H1 (cell line): ENCODE measurements at regions of chr1 and their contacts with region 1.

Region 1: GRCh38 chr1:206544562-206545257 is 37.4 kb downstream of the RASSF5 start:
- DNase-seq: peak; percentile 50 to 99
- H3K4me3 ChIP-seq: no peak overlapping the region
- H3K27ac ChIP-seq: no peak overlapping the region
- H3K4me1 ChIP-seq: peaks cover 0 to 3% (median 2%) of the 10 kb centered on the region in 4 experiments; a peak in 2 of 7 replicates
- H3K27me3 ChIP-seq: no peaks in the 10 kb centered on the region
- CTCF ChIP-seq: peak; percentile 84 to 93 (median 92)
- EP300 ChIP-seq: peak in 1 of 2 experiments; percentile 58; a peak in 1 of 3 replicates
- POLR2A ChIP-seq: no peak
- RAD21 ChIP-seq: peak; percentile 80 to 88

Region 2: DNA sequence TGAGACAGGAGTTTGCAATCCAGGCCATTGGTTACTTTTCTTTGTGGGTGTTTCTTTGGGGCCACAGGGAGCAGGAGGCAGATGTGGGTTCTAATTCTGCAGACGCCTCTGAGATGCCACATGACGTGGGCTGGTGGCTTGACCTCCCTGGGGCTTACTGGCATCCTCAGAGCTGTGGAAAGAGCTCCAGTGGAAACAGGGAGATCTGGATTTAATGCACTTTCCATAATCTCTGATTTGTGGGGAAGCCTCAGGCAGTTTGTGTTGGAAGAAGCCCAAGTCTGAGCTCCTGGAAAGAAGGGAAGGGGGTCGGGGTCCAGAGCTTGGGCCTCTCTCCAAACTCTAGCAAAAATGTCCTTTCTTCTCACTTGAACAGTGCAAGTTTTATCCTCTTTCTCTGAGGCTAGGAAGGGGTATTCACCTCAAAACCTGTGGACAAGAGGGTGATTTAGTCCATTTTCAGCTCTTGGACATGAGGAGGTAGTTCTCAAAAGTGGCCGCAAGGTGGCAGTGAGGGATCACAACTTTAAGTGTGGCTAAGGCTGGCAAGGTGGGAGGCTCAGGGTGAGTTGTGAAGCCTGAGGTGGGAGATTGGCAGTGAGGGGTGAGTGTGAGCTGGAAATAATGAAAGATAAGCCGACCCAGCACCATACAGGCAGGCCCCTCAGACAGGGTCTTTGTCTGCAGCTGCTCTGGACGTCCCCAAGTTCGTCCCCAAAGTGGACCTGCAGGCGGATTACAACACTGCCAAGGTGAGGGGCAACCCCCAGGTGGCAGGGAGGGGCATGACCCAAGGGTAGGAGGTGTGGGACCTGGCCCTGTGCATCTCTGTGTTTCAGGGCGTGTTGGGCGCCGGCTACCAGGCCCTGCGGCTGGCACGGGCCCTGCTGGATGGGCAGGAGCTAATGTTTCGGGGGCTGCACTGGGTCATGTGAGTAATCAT is 65.3 kb before region 1 on chr1:
- CTCF ChIA-PET with region 1: interaction called, 16 read pairs
- POLR2A ChIA-PET with region 1: no interaction called
- DNase-seq: peak; percentile 60 to 81
- H3K4me3 ChIP-seq: no peak overlapping the region
- H3K27ac ChIP-seq: no peak overlapping the region
- H3K4me1 ChIP-seq: peaks cover 0 to 3% (median 0%) of the 10 kb centered on the region in 4 experiments; a peak in 1 of 7 replicates
- H3K27me3 ChIP-seq: no peaks in the 10 kb centered on the region
- CTCF ChIP-seq: peak; percentile 65 to 87 (median 82)
- EP300 ChIP-seq: no peak
- POLR2A ChIP-seq: no peak
- RAD21 ChIP-seq: peak; percentile 81 to 82

Region 3: GRCh38 chr1:206507284-206508129 is 37.2 kb before region 1 on chr1 and contains the start of gene RASSF5:
- CTCF ChIA-PET with region 1: interaction called, 12 read pairs
- POLR2A ChIA-PET with region 1: interaction called, 5 read pairs
- DNase-seq: peak; percentile 27 to 94
- H3K4me3 ChIP-seq: peak within 1 kb of the TSS; percentile 37 to 71 (median 64)
- H3K27ac ChIP-seq: no peak within 1 kb of the TSS
- H3K4me1 ChIP-seq: peaks cover 2 to 14% (median 6%) of the 10 kb centered on the region in 4 experiments; a peak in 6 of 7 replicates
- H3K27me3 ChIP-seq: peaks cover 17 to 49% (median 47%) of the 10 kb centered on the region in 4 experiments
- CTCF ChIP-seq: no peak
- EP300 ChIP-seq: no peak
- POLR2A ChIP-seq: peak; percentile 87 to 88
- RAD21 ChIP-seq: no peak
- total RNA-seq, gene RASSF5: 1.8 and 2.3 TPM in 2 replicates

Region 4: DNA sequence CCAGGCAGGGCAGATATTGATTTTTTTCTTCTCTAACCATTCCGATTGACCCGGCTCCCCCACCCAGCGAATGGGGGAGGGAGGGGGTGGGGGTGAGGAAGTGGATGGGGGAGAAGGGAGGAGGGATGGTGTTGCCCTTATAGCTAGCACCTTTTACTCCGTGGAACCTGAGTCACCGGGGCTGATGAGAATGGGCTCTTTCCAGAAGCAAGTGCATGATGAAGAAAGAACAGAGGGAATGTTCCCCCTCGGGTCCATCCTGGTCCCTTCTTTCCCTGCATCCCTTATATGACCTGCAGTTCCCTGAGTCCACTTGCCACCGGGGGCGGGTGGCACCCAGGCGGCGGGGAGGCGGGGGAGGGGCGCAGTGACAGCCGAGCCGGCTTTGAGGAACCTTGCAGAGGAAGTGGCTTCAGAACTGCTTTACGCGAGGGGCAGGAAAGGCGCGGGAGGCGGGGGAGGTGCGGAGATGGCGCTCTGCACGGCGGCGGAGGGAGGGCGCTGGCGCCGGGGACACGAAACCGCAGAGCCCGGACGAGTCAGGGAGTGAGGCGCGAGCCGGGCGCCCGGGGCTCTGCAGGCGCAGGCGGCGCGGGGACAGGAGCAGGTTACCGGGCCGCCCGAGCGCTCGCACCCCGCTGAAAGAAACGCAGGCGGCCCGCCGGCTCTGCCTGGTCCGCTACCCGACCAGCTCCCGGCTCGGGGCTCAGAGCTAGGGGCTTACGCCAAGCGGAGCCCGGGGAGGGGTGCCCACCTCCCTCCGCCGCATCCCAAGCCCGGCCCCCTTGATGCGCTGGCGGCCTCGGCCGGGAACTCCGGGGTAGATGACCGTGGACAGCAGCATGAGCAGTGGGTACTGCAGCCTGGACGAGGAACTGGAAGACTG is 12.3 kb after region 1 on chr1:
- CTCF ChIA-PET with region 1: interaction called, 95 read pairs
- POLR2A ChIA-PET with region 1: interaction called, 3 read pairs
- DNase-seq: peak in 1 of 2 experiments; percentile 77
- H3K4me3 ChIP-seq: peak overlapping the region; percentile 43 to 65 (median 48)
- H3K27ac ChIP-seq: no peak overlapping the region
- H3K4me1 ChIP-seq: peaks cover 4 to 7% (median 5%) of the 10 kb centered on the region in 4 experiments; a peak in 6 of 7 replicates
- H3K27me3 ChIP-seq: peaks cover 5 to 29% (median 19%) of the 10 kb centered on the region in 4 experiments
- CTCF ChIP-seq: no peak
- EP300 ChIP-seq: no peak
- POLR2A ChIP-seq: no peak
- RAD21 ChIP-seq: no peak

Region 5: DNA sequence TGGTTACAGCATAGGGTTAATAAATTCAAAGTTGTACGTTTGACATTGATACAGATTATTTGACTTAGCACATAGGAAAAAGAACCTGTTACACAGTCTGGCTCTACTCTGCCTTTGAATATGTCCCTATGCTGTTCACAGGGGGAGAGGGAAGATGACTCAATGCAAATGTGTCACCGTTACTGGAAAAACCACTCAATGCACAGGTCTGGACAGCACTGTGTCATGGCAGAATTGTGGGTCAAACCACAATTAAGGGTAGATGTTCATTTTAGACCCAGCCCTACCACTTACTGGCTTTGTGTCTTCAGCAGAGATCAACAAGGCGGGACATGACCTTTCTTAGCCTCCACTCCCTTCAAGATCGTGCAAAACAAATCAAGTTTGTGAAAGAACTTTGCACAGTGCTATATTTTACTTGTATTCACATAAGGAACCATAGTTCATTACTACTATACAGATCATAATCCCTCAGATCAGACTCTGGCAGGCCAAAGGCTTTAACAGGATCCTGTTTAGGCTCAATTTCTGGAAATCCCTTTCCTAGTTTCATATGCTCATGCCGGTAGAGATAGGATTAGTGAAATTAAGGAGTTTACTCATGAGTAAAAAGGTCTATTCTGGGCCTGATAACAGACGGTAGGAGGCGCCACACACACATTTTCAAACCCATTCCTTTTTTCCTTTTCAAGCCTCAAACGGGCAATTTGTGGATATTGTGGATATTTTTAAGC is 45.5 kb after region 1 on chr1:
- CTCF ChIA-PET with region 1: interaction called, 298 read pairs
- POLR2A ChIA-PET with region 1: no interaction called
- DNase-seq: no peak
- H3K4me3 ChIP-seq: no peak overlapping the region
- H3K27ac ChIP-seq: no peak overlapping the region
- H3K4me1 ChIP-seq: no peaks in the 10 kb centered on the region
- H3K27me3 ChIP-seq: no peaks in the 10 kb centered on the region
- CTCF ChIP-seq: peak in 2 of 3 experiments; percentile 49 to 69; a peak in 3 of 4 replicates
- EP300 ChIP-seq: no peak
- POLR2A ChIP-seq: no peak
- RAD21 ChIP-seq: peak; percentile 40 to 54; a peak in 3 of 4 replicates